ENCODE measurements at regions of chr18 and their contacts with region 1.

Region 1: DNA sequence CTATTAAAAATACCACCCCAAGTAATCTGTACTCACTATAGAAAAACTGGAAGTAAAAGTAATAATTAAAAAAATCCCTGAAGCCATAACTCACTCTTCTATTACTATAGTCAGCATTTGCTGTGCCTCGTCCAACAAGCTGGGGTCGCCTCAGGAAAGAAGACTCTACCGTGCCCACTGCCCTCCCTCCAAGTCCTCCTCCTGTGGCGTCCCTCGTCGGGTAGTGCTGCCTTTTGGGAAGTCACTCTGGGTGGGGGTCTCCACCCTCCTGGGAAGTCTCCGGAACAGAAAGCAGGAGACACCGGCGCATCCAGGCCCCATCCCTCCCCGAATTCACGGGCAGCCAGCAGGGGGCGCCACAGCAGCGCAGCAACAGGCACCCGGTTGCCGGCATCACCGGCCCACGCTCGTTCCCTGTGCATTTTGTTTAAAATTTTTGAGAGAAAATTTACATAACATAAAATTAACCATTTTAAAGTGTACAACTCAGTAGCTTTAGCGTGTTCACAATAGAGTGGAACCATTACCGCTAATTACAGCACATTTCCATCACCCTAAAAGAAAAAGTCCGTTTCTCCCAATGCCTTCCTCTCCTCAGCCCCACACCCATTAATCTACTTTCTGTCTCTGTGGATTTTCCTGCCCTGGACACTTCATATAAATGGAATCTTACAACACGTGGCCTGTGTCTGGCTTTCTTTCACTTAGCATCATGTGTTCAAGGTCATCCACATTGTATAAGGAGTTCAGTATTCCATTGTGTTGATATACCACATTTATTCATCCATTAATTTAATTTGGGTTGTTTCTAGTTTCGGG is 62.2 kb downstream of the ADNP2 start:
- DNase-seq: peak; percentile 20 to 72 (median 32)
- H3K4me3 ChIP-seq: no peak overlapping the region
- H3K4me3 Mint-ChIP-seq: peak overlapping the region in 5 of 7 donors; percentile 1 to 80 (median 25)
- H3K27ac ChIP-seq: no peak overlapping the region
- H3K27ac Mint-ChIP-seq: peak overlapping the region in 7 of 8 donors; percentile 5 to 95 (median 66)
- H3K4me1 ChIP-seq: peaks cover 37% of the 10 kb centered on the region
- H3K4me1 Mint-ChIP-seq: peaks cover 20 to 58% (median 32%) of the 10 kb centered on the region in 3 donors
- H3K27me3 ChIP-seq: no peaks in the 10 kb centered on the region
- H3K27me3 Mint-ChIP-seq: peaks cover 20 to 27% of the 10 kb centered on the region in 2 donors

Region 2: DNA sequence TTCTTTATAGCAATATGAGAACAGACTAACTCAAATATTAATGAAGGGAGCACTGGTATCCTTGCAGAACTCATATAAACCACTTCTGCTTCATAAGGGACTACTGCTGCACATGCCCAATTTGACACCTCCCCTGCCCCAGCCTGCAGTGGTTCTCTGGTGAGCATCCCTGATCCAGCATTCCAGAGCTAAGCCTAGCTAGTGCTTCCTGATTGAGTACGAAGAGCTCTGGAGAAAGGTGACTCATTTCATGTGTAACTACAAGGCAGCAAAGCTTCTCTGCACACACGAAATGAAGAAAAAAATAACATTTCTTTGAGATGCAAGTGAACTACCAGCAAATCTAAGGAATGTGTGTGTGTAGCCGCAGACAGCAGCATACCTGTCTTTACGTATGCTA is 85.0 kb before region 1 on chr18:
- CTCF ChIA-PET with region 1: no interaction called
- POLR2A ChIA-PET with region 1: no interaction called
- DNase-seq: no peak
- H3K4me3 ChIP-seq: no peak overlapping the region
- H3K4me3 Mint-ChIP-seq: no peak overlapping the region
- H3K27ac ChIP-seq: no peak overlapping the region
- H3K27ac Mint-ChIP-seq: peak overlapping the region in 1 of 8 donors; percentile 56
- H3K4me1 ChIP-seq: no peaks in the 10 kb centered on the region
- H3K4me1 Mint-ChIP-seq: no peaks in the 10 kb centered on the region
- H3K27me3 ChIP-seq: peaks cover 4% of the 10 kb centered on the region
- H3K27me3 Mint-ChIP-seq: peaks cover 7 to 32% of the 10 kb centered on the region in 2 donors

Region 3: DNA sequence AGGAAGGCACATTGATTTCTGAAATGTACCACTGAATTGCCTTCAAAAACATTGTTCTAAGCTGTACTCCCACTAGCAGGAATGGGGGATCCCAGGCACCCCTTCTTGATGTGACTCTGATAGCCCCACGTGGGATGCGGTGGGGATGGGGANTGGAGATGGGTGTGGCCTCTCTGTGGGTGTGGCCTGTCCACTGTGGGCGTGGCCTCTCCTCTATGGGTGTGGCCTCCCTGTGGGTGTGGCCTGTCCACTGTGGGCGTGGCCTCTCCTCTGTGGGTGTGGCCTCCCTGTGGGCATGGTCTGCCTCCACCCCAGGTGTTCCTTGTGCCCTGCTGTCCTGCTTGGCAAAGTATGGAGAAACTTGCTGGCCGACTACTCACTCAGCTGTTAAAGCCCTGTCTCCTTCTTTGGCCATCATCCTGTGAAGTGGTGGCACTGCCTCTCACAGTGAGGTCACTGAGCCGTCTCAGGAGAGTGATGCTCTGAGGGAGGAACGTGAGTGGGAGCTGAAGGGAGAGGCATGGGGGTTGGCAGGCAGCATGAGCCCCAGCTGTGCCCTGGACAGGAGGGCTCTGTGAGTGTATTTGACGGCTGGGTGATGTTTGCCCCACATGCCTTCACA is 82.7 kb after region 1 on chr18:
- CTCF ChIA-PET with region 1: interaction called, 21 read pairs
- POLR2A ChIA-PET with region 1: no interaction called
- DNase-seq: peak in 2 of 5 donors; percentile 23 to 59
- H3K4me3 ChIP-seq: no peak overlapping the region
- H3K4me3 Mint-ChIP-seq: no peak overlapping the region
- H3K27ac ChIP-seq: no peak overlapping the region
- H3K27ac Mint-ChIP-seq: peak overlapping the region in 1 of 8 donors; percentile 42
- H3K4me1 ChIP-seq: no peaks in the 10 kb centered on the region
- H3K4me1 Mint-ChIP-seq: no peaks in the 10 kb centered on the region
- H3K27me3 ChIP-seq: no peaks in the 10 kb centered on the region
- H3K27me3 Mint-ChIP-seq: peaks cover 3 to 11% of the 10 kb centered on the region in 2 donors